Activated T-helper 2 cell treated with anti-CD3 and anti-CD28 coated beads, Interferon-gamma antibody, Interleukin-2, Interleukin-4, amounts not matched to agents 10 μg/mL and 5 μg/mL and 100 μg/mL, durations not matched to agents 14 hours and 24 hours and 36 hours (primary cell): ENCODE measurements at regions of chr6 and their contacts with region 1.

Region 1: GRCh38 chr6:63352587-63353285 is 33.0 kb upstream of the LGSN start:
- DNase-seq: no peak
- H3K4me3 Mint-ChIP-seq: peak overlapping the region; percentile 47
- H3K27ac Mint-ChIP-seq: no peak overlapping the region
- H3K4me1 Mint-ChIP-seq: peaks cover 13% of the 10 kb centered on the region
- H3K27me3 Mint-ChIP-seq: peaks cover 5% of the 10 kb centered on the region

Region 2: GRCh38 chr6:63527658-63528514 is 175.2 kb after region 1 on chr6:
- intact Hi-C with region 1: loop called (anchors 10 kb)
- DNase-seq: no peak
- H3K4me3 Mint-ChIP-seq: no peak overlapping the region
- H3K27ac Mint-ChIP-seq: peak overlapping the region; percentile 62
- H3K4me1 Mint-ChIP-seq: peaks cover 49% of the 10 kb centered on the region
- H3K27me3 Mint-ChIP-seq: no peaks in the 10 kb centered on the region

Region 3: DNA sequence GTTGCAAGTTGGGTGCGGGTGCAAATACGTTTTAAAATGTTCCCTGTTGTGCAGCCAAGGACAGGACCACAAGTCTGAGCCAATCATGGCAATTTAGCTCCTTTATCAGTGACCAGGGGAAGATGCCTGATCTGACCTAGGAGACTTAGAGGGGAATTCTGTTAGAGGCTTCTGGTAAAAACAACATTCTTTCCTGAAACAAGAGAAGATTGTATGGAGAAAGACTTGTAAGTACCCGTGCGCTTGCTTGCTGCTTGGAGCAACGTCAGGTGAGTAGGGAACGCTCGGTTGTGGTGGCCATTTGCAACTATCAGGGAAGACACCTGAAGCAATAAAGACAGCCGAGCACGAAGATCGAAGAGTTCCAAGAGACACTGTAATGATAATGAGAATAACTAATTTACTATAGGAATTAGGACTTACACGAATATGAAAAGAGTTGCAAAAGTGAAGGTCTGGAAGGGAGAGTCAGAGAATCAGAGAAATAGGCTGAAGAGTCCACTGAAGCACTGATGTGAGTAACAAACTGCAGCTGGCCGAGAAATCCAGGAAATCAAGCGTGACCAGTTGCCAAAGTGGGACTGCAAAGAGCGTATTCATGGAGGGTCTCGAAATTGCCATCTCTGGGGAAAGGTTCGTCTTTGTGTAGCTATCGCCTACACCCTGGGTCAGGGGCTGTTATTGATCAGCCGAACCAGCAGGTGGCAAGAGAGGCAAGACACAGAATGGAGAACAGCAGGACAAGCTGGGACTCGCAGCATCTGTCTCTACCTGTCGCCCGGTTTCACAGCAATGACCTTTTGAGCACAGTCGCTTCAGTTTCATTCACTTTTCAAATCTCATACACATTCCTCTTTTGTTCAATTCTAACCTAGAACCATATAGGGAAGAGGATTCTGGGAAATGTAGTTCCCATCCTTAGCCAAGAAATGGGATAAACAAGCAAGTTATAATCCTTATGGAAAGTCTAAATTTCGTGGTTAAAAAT is 245.6 kb after region 1 on chr6:
- intact Hi-C with region 1: loop called (anchors 2 kb)
- DNase-seq: peak; percentile 64
- H3K4me3 Mint-ChIP-seq: peak overlapping the region; percentile 86
- H3K27ac Mint-ChIP-seq: no peak overlapping the region
- H3K4me1 Mint-ChIP-seq: peaks cover 26% of the 10 kb centered on the region
- H3K27me3 Mint-ChIP-seq: peaks cover 8% of the 10 kb centered on the region